Activated CD4-positive, alpha-beta T cell treated with anti-CD3 and anti-CD28 coated beads, Interleukin-2, amount 10 ng/mL, durations not matched to agents 24 days and 14 days (primary cell): ENCODE measurements at regions of chr4 and their contacts with region 1.

Region 1: DNA sequence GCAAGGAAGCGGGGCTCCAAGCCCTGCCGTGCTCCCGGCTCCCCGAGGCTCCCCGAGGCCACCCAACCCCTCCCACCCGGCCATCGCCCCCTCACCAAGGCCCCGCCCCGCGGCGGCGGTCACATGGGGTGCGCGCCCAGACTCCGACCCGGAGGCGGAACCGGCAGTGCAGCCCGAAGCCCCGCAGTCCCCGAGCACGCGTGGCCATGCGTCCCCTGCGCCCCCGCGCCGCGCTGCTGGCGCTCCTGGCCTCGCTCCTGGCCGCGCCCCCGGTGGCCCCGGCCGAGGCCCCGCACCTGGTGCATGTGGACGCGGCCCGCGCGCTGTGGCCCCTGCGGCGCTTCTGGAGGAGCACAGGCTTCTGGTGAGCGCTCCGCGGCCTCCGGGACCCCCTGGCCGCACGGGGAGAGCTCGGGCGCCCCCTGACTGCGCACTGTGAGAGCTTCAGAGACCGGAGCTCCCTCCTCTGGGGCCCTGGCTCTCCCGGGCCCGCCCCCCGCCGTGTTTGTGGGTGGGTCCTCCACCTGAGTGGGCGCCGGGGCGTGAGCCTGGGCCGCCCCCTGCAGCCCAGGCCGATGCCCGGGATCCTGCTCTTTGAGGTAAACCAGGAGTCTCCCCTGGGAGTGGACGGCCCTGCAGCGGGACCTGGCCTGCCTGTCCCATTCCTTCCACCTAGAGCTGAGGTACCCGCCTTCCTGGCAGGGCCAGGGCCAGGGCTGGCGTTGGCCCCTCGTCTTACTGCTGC is at the start of gene IDUA:
- DNase-seq: peak; percentile 96
- H3K4me3 Mint-ChIP-seq: peak within 1 kb of the TSS; percentile 86
- H3K27ac Mint-ChIP-seq: peak within 1 kb of the TSS; percentile 87
- H3K4me1 Mint-ChIP-seq: peaks cover 15% of the 10 kb centered on the region
- H3K27me3 Mint-ChIP-seq: no peaks in the 10 kb centered on the region
- total RNA-seq, gene IDUA: 30.4 and 31.2 TPM in 2 replicates

Region 2: DNA sequence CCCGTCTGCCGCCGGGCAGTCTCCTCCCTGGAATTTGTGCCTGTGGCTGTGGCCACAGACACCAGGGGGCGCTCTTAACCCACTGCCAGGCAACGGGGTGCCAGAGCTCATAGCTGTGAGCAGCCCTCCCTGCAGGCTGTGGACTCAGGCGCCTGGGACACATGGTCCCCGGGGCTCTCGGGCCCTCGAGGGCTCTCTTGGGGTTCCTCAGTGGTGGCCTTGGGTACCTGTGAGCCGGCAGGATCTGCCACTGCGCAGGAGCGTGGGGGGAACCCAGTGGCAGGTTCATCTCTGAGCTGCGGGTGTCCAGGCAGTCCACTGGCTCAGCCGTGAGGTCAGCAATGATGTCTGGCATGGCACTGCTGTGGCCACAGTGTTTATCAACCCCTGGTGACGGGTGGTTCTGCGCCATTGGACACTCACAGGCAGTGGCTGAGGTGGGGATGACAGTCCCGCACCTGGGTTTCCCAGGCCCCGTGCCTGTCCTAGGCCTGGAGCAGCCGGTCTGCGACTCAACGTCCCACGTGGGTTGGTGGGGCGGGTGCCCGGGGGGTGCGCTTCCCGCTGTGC is 244.2 kb before region 1 on chr4:
- intact Hi-C with region 1: loop called (anchors 2 kb)
- DNase-seq: peak; percentile 93
- H3K4me3 Mint-ChIP-seq: no peak overlapping the region
- H3K27ac Mint-ChIP-seq: peak overlapping the region; percentile 53
- H3K4me1 Mint-ChIP-seq: peaks cover 3% of the 10 kb centered on the region
- H3K27me3 Mint-ChIP-seq: no peaks in the 10 kb centered on the region

Region 3: GRCh38 chr4:872241-872981 is 114.6 kb before region 1 on chr4:
- intact Hi-C with region 1: no loop called
- DNase-seq: no peak
- H3K4me3 Mint-ChIP-seq: no peak overlapping the region
- H3K27ac Mint-ChIP-seq: no peak overlapping the region
- H3K4me1 Mint-ChIP-seq: peaks cover 2% of the 10 kb centered on the region
- H3K27me3 Mint-ChIP-seq: no peaks in the 10 kb centered on the region

Region 4: GRCh38 chr4:945274-946110 is 41.6 kb before region 1 on chr4:
- intact Hi-C with region 1: no loop called
- DNase-seq: no peak
- H3K4me3 Mint-ChIP-seq: no peak overlapping the region
- H3K27ac Mint-ChIP-seq: no peak overlapping the region
- H3K4me1 Mint-ChIP-seq: no peaks in the 10 kb centered on the region
- H3K27me3 Mint-ChIP-seq: no peaks in the 10 kb centered on the region

Region 5: DNA sequence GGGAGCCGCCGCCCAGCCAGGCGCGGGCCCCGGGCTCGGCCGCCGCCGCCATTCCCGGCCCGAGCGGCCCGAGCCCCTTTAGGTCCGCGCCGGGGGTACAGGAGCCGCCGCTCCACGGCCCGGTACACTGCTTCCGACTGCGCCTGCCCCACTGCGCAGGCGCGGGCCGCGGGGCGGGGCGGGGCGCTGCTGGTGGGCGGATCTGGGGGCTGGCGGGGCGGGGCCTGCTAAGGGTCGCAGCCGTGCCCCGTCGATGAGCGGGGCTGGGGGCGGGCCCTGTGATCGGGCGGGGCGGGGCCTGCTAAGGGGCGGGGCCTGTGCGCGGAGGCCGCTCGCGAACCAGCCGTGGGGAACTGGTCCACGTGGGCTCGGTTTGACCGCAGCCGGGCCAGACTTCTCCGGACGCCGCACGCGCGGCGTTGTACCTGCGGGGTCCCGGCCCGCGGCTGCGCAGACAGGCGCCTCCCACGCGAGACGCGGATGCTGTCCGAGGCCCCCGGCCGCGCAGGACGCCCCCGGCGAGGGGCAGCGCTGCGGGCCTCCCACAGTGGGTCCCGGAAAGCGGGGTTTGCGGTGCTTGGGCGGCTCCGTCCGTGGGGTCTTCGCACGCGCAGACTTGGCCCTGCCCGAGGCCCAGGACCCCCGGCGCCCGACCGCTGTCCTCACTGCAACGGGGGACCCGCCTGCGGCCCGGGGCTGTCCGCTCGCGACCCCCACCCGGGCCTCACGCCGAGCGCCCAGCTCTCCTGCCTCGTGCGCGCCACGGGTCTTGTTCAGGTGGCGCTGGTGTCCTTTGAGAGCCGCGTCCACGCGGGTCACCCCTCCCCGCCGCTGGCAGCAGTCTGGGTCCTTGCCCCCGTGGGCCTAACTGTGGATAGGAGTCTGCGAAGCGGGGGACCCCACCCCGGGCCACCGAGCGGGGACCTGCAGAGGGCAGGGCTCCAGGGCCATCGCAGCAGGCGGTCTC is 13.3 kb before region 1 on chr4 and contains the start of gene DGKQ:
- intact Hi-C with region 1: loop called (anchors 1 kb)
- DNase-seq: peak; percentile 95
- H3K4me3 Mint-ChIP-seq: peak within 1 kb of the TSS; percentile 67
- H3K27ac Mint-ChIP-seq: no peak within 1 kb of the TSS
- H3K4me1 Mint-ChIP-seq: peaks cover 5% of the 10 kb centered on the region
- H3K27me3 Mint-ChIP-seq: no peaks in the 10 kb centered on the region
- total RNA-seq, gene DGKQ: 15.2 and 16.6 TPM in 2 replicates

Region 6: DNA sequence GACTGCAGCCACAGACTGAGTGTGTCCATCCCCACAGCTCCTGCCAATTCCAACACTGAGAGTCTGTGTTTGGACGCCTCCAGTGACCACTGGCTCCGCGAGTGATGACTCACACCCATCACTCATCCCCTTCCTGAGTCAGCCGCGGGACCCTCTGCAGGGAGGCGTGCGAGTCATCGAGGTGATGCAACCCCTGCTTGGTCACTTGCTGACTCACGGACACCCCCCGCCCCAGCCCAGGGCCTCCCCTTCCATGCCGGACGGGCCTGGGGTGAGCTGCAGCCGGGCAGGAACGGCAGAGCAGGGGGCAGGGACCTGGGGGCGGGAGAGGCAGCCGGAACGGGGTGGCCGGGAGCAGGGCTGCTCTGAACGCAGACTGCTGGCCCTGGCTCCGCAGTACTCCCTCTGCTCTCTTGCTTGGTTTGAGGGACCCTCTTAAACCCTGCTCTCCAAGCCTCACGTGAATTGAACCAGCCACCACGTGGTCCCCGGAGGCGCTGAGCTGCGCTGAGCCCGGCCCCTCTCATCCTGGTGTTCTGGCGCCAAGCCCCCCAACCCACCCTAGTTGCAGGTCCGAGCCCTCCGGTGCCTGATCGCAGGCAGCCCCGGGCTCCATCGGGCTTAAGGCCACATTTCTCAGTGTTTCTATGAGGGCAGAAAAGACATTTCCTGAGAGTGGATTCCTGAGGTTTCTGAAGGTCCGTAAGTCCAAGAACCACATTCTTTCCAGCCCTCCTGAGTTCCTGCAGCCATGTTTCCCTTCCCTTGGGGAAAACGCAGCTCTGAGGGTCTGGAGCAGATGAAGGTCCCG is 56.8 kb after region 1 on chr4:
- intact Hi-C with region 1: no loop called
- DNase-seq: no peak
- H3K4me3 Mint-ChIP-seq: no peak overlapping the region
- H3K27ac Mint-ChIP-seq: no peak overlapping the region
- H3K4me1 Mint-ChIP-seq: peaks cover 3% of the 10 kb centered on the region
- H3K27me3 Mint-ChIP-seq: peaks cover 18% of the 10 kb centered on the region